Esophagus muscularis mucosa (tissue), 4 donors: ENCODE measurements at regions of chr9 and their contacts with region 1.

Region 1: DNA sequence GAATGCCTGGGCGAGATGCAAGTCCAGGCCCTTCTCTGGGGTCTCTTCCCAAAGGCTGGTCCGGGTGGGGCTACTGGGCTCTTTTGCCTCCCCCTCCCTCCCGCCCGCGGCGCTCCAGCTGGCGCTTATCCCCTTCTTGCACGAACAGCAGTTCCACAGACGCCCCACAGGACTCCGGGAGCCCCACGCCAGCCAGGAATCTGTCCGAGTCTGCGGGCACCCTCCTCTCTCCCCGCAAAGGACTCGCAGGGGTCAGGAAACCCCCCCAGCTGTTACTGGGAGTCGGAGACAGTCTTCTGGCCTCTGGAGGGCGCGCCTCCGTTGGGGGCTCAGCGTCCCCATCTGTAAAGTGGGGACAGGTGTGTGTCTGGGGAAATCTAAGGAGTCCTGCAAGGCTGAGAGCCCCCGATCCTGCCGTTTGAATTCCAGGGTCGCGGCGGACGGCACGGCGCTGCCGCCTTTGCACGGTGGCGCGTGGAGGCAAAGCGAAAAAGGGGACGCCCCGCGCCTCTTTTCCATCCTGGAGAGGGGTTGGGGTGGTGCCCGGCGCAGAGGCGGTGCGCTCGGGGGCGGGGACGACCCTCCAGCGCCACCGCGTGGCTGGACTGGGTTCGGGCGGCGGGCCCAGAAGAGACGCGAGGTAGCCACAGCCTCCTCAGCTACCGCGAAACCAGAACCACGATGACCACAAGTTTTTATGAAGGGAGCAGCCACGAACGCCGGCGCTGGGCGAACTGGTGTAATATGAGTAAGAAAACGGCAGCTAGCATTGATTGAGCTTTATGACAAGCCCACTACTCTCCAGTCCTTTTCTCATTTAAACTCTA is 2.9 kb upstream of the CCIN start:
- DNase-seq: peak; percentile 96
- H3K4me3 ChIP-seq: peak overlapping the region; percentile 56 to 67 (median 65)
- H3K27ac ChIP-seq: peak overlapping the region; percentile 80 to 88 (median 87)
- H3K4me1 ChIP-seq: peaks cover 16 to 59% (median 57%) of the 10 kb centered on the region in 4 donors
- H3K27me3 ChIP-seq: no peaks in the 10 kb centered on the region
- CTCF ChIP-seq: peak; percentile 82 to 96 (median 94)
- EP300 ChIP-seq: no peak
- POLR2A ChIP-seq: no peak

Region 2: DNA sequence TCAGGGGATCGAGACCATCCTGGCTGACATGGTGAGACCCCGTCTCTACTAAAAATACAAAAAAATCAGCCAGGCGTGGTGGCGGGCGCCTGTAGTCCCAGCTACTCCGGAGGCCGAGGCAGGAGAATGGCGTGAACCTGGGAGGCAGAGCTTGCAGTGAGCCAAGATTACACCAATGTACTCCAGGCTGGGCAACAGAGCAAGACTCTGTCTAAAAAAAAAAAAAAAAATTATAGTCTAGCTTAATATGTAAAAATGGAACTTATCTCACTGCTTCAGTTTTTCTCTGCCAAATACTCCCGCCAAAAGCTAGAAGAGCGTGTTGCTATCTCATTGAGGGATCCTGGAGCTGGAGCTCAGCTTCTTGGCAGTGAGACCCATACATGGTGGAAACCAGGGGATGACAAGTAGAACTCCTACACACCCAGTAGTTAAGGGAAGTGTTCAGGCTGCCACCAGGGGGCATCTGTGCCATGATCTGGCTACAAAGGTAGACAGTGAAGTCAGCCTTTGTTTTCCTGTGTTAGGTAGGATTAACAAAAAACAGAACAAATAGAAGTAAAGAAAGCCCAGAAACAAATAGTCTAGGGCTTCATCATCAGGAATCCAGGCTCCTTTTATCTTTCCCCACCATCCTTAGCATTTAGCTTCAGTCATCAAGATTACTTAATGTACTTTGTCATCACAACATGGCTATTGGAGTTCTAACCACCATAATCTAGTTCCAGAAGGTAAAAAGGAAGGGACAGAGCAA is 63.4 kb before region 1 on chr9:
- intact Hi-C with region 1: loop called (anchors 1 kb)
- DNase-seq: no peak
- H3K4me3 ChIP-seq: no peak overlapping the region
- H3K27ac ChIP-seq: peak overlapping the region in 1 of 4 donors; percentile 27
- H3K4me1 ChIP-seq: peaks cover 0 to 8% (median 1%) of the 10 kb centered on the region in 4 donors
- H3K27me3 ChIP-seq: no peaks in the 10 kb centered on the region
- CTCF ChIP-seq: peak; percentile 83 to 89 (median 87)
- EP300 ChIP-seq: no peak
- POLR2A ChIP-seq: no peak

Region 3: GRCh38 chr9:36136272-36136893 is 29.9 kb before region 1 on chr9 and contains the start of gene GLIPR2:
- intact Hi-C with region 1: loop called (anchors 2 kb)
- DNase-seq: no peak
- H3K4me3 ChIP-seq: peak within 1 kb of the TSS; percentile 83 to 99 (median 86)
- H3K27ac ChIP-seq: peak within 1 kb of the TSS; percentile 90 to 94 (median 92)
- H3K4me1 ChIP-seq: peaks cover 23 to 60% (median 54%) of the 10 kb centered on the region in 4 donors
- H3K27me3 ChIP-seq: no peaks in the 10 kb centered on the region
- CTCF ChIP-seq: peak in 2 of 3 experiments; percentile 31 to 35
- EP300 ChIP-seq: no peak
- POLR2A ChIP-seq: peak; percentile 43
- total RNA-seq, gene GLIPR2: 51.3 to 84.9 (median 59.6) TPM